ENCODE measurements at regions of chr2 and their contacts with region 1.

Region 1: DNA sequence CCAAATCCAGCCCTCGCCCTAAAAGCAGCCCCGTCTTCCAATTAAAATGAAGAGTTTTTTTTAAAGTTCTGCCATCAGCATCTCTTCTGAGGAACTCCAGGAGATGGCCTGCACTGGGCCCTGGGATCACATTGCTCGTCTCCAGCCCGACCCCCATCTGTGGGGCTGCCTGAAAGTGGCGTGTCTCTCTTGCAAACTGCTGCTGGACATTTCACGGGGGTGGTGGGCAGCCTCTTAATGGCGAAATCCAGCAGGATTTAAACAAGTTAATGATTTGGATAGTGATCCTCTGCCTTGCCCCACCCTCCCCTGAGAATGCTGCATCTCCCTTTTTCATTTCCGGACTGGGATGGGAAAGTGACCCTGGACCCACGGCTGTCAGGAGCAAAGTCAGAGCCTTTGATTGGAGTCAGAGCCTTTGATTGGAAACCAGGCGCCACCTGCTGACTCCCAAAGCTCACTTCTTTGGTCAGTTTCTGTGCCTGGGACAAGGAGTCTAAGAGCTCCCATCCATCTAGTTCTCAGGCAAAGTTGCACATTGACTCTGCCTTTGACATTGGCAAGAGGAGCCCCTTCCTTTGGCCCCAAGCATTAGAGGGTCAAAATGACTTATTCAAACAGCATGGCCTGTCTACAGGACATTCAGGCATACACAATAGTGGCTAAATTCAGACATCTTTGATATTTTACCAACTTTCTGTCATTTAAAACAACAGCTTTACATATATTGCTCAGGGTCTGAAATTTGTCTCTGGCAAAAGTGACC is 155.2 kb downstream of the SH3BP4 start:
- DNase-seq: no peak
- H3K4me3 ChIP-seq: no peak overlapping the region
- CTCF ChIP-seq: peak; percentile 82

Region 2: GRCh38 chr2:234550511-234551107 is 556.4 kb before region 1 on chr2:
- CTCF ChIA-PET with region 1: interaction called, 154 read pairs
- POLR2A ChIA-PET with region 1: no interaction called
- DNase-seq: no peak
- H3K4me3 ChIP-seq: no peak overlapping the region
- CTCF ChIP-seq: peak; percentile 92

Region 3: GRCh38 chr2:234555720-234556119 is 551.3 kb before region 1 on chr2:
- CTCF ChIA-PET with region 1: interaction called, 52 read pairs
- POLR2A ChIA-PET with region 1: no interaction called
- DNase-seq: no peak
- H3K4me3 ChIP-seq: no peak overlapping the region
- CTCF ChIP-seq: no peak

Region 4: DNA sequence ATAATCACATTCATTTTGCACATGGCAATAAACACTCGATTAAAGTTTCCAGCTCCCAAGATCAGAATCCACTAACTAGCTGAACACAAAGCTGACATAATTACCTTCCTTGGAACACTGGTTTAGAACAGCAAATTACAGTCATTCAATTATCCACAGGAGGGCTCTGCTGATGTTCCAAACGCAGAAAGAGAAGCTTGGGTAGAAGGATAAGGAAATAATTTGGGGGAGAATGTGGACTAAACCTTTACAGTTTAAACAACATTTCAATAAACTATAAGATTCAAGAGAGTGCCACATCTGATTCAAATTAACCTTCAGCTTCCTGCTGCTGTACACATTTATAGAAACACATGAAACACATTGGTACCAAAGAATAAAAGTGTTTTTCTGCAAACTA is 542.4 kb before region 1 on chr2:
- CTCF ChIA-PET with region 1: interaction called, 52 read pairs
- POLR2A ChIA-PET with region 1: no interaction called
- DNase-seq: no peak
- H3K4me3 ChIP-seq: no peak overlapping the region
- CTCF ChIP-seq: peak; percentile 42

Region 5: DNA sequence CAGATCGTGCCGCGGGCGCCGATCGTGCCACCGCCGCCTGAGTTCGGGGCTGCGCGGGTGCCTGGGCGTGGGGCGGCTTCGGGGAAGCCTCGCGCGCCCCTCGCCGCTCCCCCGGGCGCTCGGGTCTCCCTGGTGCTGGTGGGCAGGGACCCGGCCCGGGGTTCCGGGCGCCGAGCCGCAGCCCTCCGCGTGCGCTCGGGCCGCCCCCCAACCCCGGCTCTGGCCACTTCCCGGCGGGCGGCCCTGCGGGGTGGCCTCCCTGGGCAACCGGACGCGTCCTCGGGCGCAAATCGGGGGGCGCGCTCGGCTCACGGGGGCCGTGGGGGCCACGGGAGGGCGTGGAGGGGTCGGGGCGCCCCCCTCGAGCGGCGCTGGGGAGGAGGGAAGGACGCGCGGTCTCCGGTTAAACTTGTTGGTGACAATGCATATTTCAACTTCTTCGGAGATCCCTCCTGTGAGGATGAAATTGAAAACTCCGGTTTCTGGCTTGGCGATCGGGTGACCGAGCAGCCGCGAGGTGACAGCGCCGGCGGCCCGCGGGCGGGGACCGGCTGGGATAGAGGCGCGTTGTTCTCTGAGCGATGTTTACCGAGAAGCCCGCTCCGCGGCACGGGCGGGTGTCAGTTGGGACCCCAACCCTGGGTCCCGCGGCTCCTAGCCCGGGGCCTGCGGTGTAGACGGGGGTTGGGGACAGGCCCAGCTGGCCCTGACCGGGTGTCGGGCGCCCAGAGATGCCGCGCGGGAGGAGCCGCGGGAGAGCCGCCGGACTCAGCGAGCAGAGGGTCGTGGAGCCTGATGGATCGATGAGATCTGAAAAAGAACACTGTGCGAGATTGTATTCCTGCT is 154.6 kb before region 1 on chr2:
- CTCF ChIA-PET with region 1: interaction called, 38 read pairs
- POLR2A ChIA-PET with region 1: interaction called, 4 read pairs
- DNase-seq: no peak
- H3K4me3 ChIP-seq: peak overlapping the region; percentile 86
- CTCF ChIP-seq: no peak

Region 6: DNA sequence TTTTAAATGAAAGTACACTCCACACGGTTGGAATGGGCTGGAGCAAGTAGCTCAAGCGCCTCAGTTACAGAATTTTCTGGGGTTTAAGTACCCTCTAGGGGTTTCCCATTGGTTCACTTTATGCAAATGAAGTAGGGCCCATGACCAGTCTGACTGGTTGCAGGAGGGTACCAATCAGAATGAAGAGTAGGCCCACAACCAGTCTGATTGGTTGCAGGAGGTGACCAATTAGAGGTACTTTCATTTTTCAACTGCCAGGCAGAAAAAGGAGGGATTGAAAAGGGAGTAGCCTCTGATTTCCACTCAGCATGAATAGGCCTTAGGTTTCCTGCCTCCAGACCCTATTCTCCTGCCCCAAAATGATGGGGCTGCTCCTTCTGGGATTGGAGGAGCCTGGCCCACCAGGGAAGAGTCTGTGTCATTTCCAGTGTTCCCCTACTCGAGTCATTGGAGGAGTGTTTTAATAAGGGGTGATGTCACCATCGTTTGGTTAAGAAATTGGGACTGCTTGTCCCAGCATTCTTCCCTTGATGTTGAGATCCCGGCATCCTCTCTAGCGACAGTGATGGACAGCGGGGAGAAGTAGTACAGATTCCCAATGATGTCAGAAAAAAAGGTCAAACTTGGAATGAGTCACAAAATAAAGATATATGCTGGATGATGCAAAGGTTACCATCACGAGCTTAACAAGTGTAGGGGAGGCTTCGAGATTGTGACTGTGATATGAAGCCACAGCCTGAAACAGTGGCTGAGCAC is 55.2 kb after region 1 on chr2:
- CTCF ChIA-PET with region 1: no interaction called
- POLR2A ChIA-PET with region 1: no interaction called
- DNase-seq: no peak
- H3K4me3 ChIP-seq: no peak overlapping the region
- CTCF ChIP-seq: no peak

Measured in AG04449 (cell line).